ENCODE measurements at regions of chr1 and their contacts with region 1.

Region 1: DNA sequence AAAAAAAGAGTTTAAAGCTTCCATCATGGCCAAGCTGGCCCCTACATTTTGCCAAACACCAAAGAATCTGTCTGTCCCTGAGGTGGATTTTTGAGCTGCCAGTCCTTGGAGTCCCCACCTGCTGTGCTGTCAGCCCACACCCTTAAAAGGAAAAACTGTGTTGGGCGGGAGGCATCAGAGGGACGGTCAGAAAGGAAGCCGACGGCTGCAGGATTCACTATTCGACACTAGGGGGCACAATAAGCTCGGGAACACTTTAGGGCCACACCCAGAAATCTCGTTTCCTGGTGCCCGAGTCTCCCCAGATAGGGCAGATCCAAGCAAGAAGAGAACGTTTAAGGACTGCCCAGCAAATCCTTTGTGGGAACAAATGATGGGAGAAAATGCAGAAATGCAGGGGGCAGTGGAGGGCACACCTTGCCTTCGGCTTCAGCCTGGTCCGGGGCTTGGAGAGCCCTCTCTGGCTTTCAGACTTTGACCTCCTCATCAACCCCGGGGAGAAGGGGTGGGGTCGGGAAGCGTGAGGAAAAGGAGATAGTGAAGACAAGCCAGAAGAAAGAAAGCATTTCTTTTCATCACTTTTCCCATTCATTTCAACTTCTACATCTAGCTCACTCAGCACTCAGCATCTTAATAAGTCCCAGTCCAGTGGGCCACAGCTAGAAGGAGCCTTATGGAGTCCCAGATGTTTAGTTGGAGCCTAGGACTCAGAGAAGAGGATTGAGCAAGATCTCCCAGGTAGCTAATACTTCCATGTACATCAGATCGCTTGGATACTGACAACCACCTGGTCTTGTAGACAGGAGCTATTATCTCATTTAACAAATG is 5.0 kb upstream of the CTTNBP2NL start:
- DNase-seq: peak; percentile 85
- H3K4me3 Mint-ChIP-seq: peak overlapping the region; percentile 25
- H3K27ac Mint-ChIP-seq: no peak overlapping the region
- H3K4me1 Mint-ChIP-seq: peaks cover 16% of the 10 kb centered on the region
- H3K27me3 Mint-ChIP-seq: peaks cover 57% of the 10 kb centered on the region

Region 2: GRCh38 chr1:112466078-112466660 is 75.2 kb after region 1 on chr1:
- CTCF ChIA-PET with region 1: interaction called, 78 read pairs
- DNase-seq: peak; percentile 89
- H3K4me3 Mint-ChIP-seq: peak overlapping the region; percentile 63
- H3K27ac Mint-ChIP-seq: no peak overlapping the region
- H3K4me1 Mint-ChIP-seq: peaks cover 13% of the 10 kb centered on the region
- H3K27me3 Mint-ChIP-seq: peaks cover 28% of the 10 kb centered on the region

Region 3: DNA sequence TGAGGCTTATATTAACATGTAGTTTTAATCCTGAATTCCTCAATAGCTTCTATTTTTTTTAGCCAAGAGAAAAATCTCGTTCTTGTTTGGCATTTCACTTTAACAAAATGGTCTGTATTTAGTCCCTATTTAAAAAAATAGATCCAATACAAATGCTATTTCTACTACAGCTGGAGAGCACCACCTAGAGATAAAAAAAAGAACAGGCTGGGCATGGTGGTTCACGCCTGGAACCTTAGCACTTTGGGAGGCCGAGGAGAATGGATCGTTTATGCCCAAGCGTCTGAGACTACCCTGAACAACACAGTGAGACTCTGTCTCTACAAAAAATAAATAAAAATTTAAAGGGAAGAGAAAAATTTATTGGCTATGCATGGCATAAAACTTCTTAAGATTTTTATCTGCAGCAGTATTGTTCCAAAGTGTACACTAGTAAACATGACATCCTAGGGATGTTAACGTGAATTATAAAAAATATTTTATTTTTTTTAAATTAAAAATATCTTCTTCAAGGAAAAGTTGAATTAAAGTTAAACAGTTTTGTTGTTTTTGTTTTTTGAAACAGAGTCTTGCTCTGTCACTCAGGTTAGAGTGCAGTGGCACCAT is 223.6 kb after region 1 on chr1:
- CTCF ChIA-PET with region 1: interaction called, 40 read pairs
- DNase-seq: peak; percentile 38
- H3K4me3 Mint-ChIP-seq: no peak overlapping the region
- H3K27ac Mint-ChIP-seq: no peak overlapping the region
- H3K4me1 Mint-ChIP-seq: peaks cover 21% of the 10 kb centered on the region
- H3K27me3 Mint-ChIP-seq: no peaks in the 10 kb centered on the region

Region 4: DNA sequence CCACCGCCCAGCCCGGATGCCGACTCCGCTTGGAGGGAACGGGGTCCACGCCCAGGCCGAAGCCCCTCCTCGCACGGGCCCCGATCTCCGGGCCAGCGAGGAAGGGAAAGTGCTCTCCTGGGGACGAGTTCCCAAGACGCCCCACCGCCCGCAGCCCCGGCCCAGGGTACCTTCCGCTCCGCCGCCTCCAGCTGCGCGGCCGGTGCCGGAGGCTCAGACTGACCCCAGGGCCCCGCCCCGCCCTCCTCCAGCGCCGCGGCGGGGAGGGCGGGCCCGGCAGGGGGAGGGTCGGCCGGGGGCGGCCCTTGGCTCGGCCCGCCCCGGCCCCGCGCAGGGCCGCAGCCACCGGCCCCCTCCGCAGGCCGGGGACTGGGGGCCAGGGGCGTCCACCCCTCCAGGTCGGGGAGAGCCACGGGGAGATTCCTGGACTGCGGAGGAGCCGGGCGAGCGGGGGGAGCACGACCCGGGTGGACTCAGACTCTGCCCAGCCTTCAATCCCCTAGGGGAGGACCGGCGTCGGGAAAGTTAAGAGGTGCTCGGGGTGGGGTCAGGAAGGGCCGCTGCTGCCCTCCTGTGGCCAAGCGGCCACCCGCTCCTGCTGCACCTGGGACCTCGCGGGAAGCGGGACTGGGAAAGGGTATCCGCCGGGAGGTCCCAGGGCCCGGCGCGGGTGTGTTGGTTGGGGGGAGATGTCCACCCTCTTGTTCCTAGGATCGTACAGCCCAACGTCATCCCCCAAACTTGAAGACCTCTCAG is 316.1 kb after region 1 on chr1 and contains the start of gene RHOC:
- CTCF ChIA-PET with region 1: interaction called, 49 read pairs
- DNase-seq: peak; percentile 73
- H3K4me3 Mint-ChIP-seq: peak within 1 kb of the TSS; percentile 81
- H3K27ac Mint-ChIP-seq: no peak within 1 kb of the TSS
- H3K4me1 Mint-ChIP-seq: peaks cover 45% of the 10 kb centered on the region
- H3K27me3 Mint-ChIP-seq: peaks cover 49% of the 10 kb centered on the region

Region 5: GRCh38 chr1:112715264-112716053 is 324.5 kb after region 1 on chr1 and contains the start of gene PPM1J:
- CTCF ChIA-PET with region 1: interaction called, 49 read pairs
- DNase-seq: peak; percentile 99
- H3K4me3 Mint-ChIP-seq: peak within 1 kb of the TSS; percentile 79
- H3K27ac Mint-ChIP-seq: no peak within 1 kb of the TSS
- H3K4me1 Mint-ChIP-seq: peaks cover 23% of the 10 kb centered on the region
- H3K27me3 Mint-ChIP-seq: peaks cover 86% of the 10 kb centered on the region